ENCODE measurements at regions of chr3 and their contacts with region 1.

Region 1: GRCh38 chr3:58824285-58824684 is 157.7 kb upstream of the FAM3D start:
- DNase-seq: no peak
- ATAC-seq: peak; percentile 66
- H3K4me3 ChIP-seq: no peak overlapping the region
- H3K27ac ChIP-seq: no peak overlapping the region
- H3K4me1 ChIP-seq: no peaks in the 10 kb centered on the region
- H3K27me3 ChIP-seq: no peaks in the 10 kb centered on the region
- CTCF ChIP-seq: peak; percentile 46 to 67 (median 51)
- EP300 ChIP-seq: no peak
- POLR2A ChIP-seq: no peak
- RAD21 ChIP-seq: peak; percentile 80

Region 2: DNA sequence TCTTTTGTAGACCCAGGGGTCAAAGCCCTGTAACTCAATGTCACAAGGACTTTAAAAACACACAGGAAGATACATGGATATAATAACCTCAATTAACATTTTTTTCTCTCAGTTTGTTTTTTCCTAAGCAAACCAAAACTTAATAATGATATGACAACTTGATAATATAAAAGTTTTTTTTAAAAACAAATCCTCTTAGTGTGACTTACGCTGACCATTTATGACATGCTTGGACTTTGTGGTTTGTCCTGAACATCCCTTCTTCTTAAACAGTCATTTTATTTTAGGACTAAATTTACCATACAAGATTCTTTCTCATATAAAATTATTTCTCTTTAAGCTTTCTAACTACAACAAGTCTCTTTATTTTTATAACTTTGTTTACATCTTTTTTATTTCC is 132.3 kb before region 1 on chr3:
- CTCF ChIA-PET with region 1: interaction called, 12 read pairs
- POLR2A ChIA-PET with region 1: no interaction called
- RAD21 ChIA-PET with region 1: interaction called, 11 read pairs
- SMC1A ChIA-PET with region 1: interaction called, 4 read pairs
- in situ Hi-C with region 1: no loop called
- intact Hi-C with region 1: no loop called
- DNase-seq: no peak
- ATAC-seq: no peak
- H3K4me3 ChIP-seq: no peak overlapping the region
- H3K27ac ChIP-seq: no peak overlapping the region
- H3K4me1 ChIP-seq: no peaks in the 10 kb centered on the region
- H3K27me3 ChIP-seq: no peaks in the 10 kb centered on the region
- CTCF ChIP-seq: no peak
- EP300 ChIP-seq: no peak
- POLR2A ChIP-seq: no peak
- RAD21 ChIP-seq: no peak

Region 3: DNA sequence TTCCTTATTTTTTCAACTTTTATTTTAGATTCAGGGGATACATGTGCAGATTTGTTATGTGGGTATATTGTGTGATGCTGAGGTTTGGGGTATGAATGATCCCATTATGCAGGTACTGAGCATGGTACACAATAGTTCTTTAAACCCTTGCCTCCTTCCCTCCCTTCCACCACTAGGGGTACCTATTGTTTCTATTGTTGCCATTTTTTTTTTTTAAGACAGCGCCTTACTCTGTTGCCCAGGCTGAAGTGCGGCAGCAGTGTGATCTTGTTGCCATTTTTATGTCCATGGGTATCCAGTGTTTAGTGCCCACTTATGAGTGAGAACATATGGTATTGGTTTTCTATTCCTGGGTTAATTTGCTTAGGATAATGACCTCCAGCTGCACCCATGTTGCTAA is 40.4 kb before region 1 on chr3:
- CTCF ChIA-PET with region 1: no interaction called
- POLR2A ChIA-PET with region 1: no interaction called
- RAD21 ChIA-PET with region 1: no interaction called
- SMC1A ChIA-PET with region 1: no interaction called
- in situ Hi-C with region 1: no loop called
- intact Hi-C with region 1: no loop called
- DNase-seq: no peak
- ATAC-seq: no peak
- H3K4me3 ChIP-seq: no peak overlapping the region
- H3K27ac ChIP-seq: no peak overlapping the region
- H3K4me1 ChIP-seq: no peaks in the 10 kb centered on the region
- H3K27me3 ChIP-seq: no peaks in the 10 kb centered on the region
- CTCF ChIP-seq: 0 out of 6 replicates have a peak, but pooled peaks of 1 of the 3 experiments have one; percentile 7
- EP300 ChIP-seq: no peak
- POLR2A ChIP-seq: no peak
- RAD21 ChIP-seq: no peak

Region 4: GRCh38 chr3:58861551-58861950 is 37.3 kb after region 1 on chr3:
- CTCF ChIA-PET with region 1: interaction called, 13 read pairs
- POLR2A ChIA-PET with region 1: interaction called, 3 read pairs
- RAD21 ChIA-PET with region 1: interaction called, 8 read pairs
- SMC1A ChIA-PET with region 1: interaction called, 6 read pairs
- in situ Hi-C with region 1: no loop called
- intact Hi-C with region 1: no loop called
- DNase-seq: no peak
- ATAC-seq: peak; percentile 54; the same call in 2 of the 3 replicates
- H3K4me3 ChIP-seq: no peak overlapping the region
- H3K27ac ChIP-seq: no peak overlapping the region
- H3K4me1 ChIP-seq: no peaks in the 10 kb centered on the region
- H3K27me3 ChIP-seq: no peaks in the 10 kb centered on the region
- CTCF ChIP-seq: no peak
- EP300 ChIP-seq: no peak
- POLR2A ChIP-seq: no peak
- RAD21 ChIP-seq: no peak

Region 5: DNA sequence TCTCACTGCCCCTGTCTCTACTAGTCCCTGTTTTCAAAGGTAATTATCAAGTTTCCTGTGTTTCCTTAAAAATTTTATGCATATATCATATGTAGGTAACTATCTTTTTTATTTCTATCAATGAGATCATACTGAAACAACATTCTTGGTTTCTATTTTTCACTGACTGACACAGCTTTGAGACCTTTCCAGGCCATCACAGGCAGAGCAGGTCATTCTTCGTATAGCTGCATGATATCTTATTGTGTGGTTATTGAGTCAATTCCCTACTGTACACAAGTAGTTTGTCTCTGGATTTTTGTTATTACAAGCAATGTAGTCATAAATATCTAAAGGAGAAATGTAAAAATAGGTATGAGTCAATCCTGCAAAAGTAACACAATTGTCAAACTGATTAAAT is 55.9 kb after region 1 on chr3:
- CTCF ChIA-PET with region 1: interaction called, 5 read pairs
- POLR2A ChIA-PET with region 1: no interaction called
- RAD21 ChIA-PET with region 1: interaction called, 9 read pairs
- SMC1A ChIA-PET with region 1: interaction called, 19 read pairs
- in situ Hi-C with region 1: no loop called
- intact Hi-C with region 1: no loop called
- DNase-seq: no peak
- ATAC-seq: peak; percentile 94
- H3K4me3 ChIP-seq: no peak overlapping the region
- H3K27ac ChIP-seq: no peak overlapping the region
- H3K4me1 ChIP-seq: no peaks in the 10 kb centered on the region
- H3K27me3 ChIP-seq: no peaks in the 10 kb centered on the region
- CTCF ChIP-seq: no peak
- EP300 ChIP-seq: no peak
- POLR2A ChIP-seq: no peak
- RAD21 ChIP-seq: no peak

Region 6: DNA sequence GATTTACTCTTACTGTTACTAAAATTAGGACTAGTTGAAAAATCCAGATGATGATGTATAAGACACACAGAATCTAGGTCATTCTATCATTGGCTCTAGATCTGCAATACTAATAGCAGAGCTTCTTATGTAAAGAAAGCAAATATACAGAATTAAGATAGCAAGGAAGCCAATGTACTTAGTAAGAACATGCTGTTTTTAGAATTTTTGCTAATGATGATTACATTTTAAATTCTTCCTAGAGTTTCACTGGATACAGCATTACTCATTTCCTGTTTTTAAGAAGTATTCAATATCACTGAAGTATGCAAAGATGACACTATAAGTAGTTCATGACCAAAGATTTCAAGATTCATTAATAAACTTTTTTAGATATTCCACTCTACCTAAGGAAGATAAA is 164.9 kb after region 1 on chr3:
- CTCF ChIA-PET with region 1: interaction called, 21 read pairs
- POLR2A ChIA-PET with region 1: no interaction called
- RAD21 ChIA-PET with region 1: interaction called, 29 read pairs
- SMC1A ChIA-PET with region 1: interaction called, 20 read pairs
- in situ Hi-C with region 1: no loop called
- intact Hi-C with region 1: loop called (anchors 2 kb)
- DNase-seq: no peak
- ATAC-seq: no peak
- H3K4me3 ChIP-seq: no peak overlapping the region
- H3K27ac ChIP-seq: no peak overlapping the region
- H3K4me1 ChIP-seq: no peaks in the 10 kb centered on the region
- H3K27me3 ChIP-seq: no peaks in the 10 kb centered on the region
- CTCF ChIP-seq: no peak
- EP300 ChIP-seq: no peak
- POLR2A ChIP-seq: no peak
- RAD21 ChIP-seq: no peak

Region 7: DNA sequence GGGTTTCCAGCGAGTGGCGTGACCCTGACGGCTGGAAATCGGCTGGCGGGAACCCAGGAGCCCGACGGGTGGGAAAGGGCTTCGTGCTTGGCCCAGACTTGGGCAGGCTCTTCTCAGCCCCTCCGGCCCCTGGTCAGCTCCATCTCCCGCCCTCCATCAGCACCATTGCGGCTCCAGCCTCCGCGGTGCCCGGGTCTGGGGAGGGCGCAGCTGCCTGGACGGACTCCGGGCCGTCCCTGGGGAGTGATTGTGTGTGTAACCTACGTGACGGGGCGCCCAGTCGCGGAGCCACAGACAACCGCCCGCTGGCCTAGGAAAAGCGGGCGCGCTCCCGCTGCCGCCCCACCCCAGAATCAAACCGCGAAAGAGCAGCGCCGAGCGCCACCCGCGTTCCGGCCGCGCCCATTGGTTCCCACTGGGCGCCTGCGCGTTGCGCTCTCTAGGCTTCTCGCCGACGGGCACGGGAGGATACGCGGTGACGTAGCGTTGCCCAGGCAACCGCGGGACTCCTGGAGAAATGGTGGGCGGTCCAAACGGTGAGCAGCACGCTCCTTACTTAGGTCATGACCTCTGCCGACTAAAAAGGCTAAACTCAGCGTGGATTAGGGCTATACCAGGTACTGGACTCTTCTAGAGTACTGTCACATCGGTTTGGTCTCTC is 225.5 kb after region 1 on chr3 and contains the start of gene CFAP20DC:
- CTCF ChIA-PET with region 1: interaction called, 180 read pairs
- POLR2A ChIA-PET with region 1: no interaction called
- RAD21 ChIA-PET with region 1: interaction called, 102 read pairs
- SMC1A ChIA-PET with region 1: interaction called, 136 read pairs
- in situ Hi-C with region 1: loop called (anchors 10 kb)
- intact Hi-C with region 1: loop called (anchors 1 kb)
- DNase-seq: peak; percentile 62
- ATAC-seq: peak; percentile 98
- H3K4me3 ChIP-seq: peak within 1 kb of the TSS; percentile 66
- H3K27ac ChIP-seq: 0 out of 2 replicates have a peak within 1 kb of the TSS, but pooled peaks have one; percentile 10
- H3K4me1 ChIP-seq: no peaks in the 10 kb centered on the region
- H3K27me3 ChIP-seq: no peaks in the 10 kb centered on the region
- CTCF ChIP-seq: no peak
- EP300 ChIP-seq: no peak
- POLR2A ChIP-seq: peak; percentile 84
- RAD21 ChIP-seq: no peak
- polyA plus RNA-seq, gene CFAP20DC: 0.53 to 1.2 TPM

Region 8: DNA sequence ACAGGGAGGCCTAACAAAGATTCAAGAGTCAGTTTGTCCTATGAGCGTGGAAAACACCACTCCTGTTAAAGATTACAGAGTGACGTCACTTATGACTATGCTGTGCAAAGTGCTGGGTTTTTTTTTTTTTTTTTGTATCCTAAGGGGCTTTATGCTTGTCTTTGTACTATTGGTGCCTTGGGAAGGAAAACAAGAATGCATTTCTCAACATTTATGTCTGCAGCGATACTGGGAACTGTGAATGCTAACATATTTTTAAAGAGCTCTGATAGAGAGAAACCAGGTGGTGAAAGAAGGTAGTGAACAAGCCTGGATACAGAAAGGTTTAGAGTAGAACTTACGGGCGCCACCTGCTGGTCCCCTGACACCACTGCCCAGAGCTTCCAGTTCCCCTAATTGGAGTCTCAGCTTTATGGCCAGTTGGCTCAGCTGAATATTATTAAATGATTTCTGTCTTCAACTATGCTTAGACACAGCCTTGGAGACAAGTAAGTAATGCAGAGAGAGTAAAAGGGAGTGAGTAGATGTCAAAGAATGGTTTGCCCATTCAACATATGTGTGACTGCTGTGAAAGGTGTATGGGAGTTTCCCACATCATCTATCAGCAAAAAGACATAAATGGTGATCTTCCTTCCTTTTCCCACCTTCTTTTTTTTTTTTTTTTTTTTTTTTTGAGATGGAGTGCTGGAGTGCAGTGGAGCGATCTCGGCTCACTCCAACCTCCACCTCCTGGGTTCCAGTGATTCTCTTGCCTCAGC is 1033.5 kb after region 1 on chr3:
- CTCF ChIA-PET with region 1: interaction called, 10 read pairs
- POLR2A ChIA-PET with region 1: no interaction called
- RAD21 ChIA-PET with region 1: interaction called, 9 read pairs
- SMC1A ChIA-PET with region 1: interaction called, 6 read pairs
- in situ Hi-C with region 1: no loop called
- intact Hi-C with region 1: no loop called
- DNase-seq: peak; percentile 17
- ATAC-seq: peak; percentile 100
- H3K4me3 ChIP-seq: no peak overlapping the region
- H3K27ac ChIP-seq: no peak overlapping the region
- H3K4me1 ChIP-seq: no peaks in the 10 kb centered on the region
- H3K27me3 ChIP-seq: no peaks in the 10 kb centered on the region; a peak in 1 of 4 replicates
- CTCF ChIP-seq: peak; percentile 89 to 96 (median 95)
- EP300 ChIP-seq: no peak
- POLR2A ChIP-seq: no peak
- RAD21 ChIP-seq: peak; percentile 85

Measured in GM12878 (cell line).